ENCODE measurements at regions of chr2 and their contacts with region 1.

Region 1: DNA sequence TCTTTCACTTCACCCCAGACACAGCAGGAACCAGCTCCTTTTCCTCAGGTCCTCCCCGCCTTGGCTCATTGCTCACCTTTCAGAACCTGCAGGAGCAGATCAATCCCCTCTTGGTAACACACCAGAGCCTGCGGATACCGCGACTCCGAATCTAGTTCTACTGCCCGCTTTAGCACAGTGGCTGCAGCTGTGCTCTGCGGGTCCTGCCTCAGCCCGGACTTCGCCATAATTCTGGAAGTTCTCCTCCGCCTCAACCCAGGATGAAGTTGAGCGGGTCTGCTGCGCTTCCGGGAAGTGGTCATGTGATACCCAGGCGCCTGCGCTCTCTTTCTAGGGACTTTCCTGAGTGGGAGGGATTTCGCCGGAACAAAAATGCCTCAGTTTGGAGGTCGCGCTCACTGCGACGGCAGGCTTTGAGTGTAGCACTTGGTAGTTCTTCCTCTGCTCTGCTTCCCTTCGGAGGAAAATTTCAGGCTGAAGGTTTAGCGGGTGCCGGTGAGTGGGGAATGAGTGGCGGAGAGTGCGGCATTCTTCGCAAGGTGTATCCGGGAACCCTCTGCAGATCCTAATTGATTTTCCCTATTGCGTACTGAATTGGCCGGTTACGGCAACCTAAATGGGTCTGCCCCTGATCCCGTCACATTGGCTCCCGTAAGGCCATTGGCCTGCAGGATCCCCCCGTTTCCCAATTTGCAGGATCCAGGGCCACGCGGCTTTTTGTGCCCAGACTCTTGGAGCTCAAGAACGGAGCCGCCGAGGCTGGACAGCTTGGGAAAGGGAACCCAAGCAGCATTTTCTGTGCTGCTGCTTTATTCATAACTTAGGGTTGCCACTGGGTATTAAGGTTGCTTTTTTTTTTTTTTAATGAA is at the starts of genes MITD1 and MRPL30:
- DNase-seq: peak; percentile 92 to 93
- H3K4me3 ChIP-seq: peak within 1 kb of the TSS; percentile 84
- H3K27ac ChIP-seq: peak within 1 kb of the TSS; percentile 56
- H3K4me1 ChIP-seq: peaks cover 37% of the 10 kb centered on the region
- H3K27me3 ChIP-seq: no peaks in the 10 kb centered on the region
- CTCF ChIP-seq: no peak
- total RNA-seq, gene MITD1: 35.0 and 37.6 TPM in 2 replicates
- total RNA-seq, gene MRPL30: 50.1 and 52.6 TPM in 2 replicates

Region 2: DNA sequence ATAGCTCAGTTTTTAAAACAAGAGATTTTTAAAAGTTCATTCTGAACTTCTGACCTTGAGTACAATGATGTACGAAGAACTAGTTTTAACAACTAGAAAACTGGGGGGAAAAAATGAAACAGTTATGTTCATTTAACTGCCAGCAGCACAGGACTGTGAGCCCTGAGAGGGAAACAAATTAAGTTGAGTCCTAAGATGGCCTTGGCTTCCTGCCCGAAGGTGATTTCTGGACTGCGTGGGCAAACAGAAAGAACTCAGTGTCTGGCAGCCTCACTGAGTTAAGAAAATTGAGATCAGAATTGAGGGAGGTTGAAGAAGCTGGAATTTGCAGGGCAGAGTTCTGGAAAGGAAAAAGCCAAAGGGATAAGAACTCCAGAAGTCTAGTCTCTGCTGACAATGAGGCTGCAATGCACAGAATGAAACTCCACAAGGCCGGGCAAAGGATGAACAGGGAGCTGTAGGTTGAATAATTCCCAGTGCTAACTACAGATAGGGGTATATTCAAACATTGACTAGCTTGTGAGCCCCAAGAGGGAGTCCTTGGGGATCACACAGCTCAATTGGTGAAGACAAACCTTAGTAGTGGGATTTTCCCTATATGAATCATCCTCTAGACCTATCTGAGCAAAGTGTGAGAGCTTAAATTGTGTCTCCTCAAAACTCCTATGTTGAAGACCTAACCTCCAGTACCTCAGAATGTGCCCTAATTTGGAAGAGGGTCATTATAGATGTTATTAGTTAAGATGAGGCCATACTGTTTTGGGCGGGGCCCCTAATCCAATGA is 231.8 kb before region 1 on chr2:
- CTCF ChIA-PET with region 1: no interaction called
- POLR2A ChIA-PET with region 1: no interaction called
- intact Hi-C with region 1: no loop called
- DNase-seq: no peak
- H3K4me3 ChIP-seq: no peak overlapping the region
- H3K27ac ChIP-seq: no peak overlapping the region
- H3K4me1 ChIP-seq: no peaks in the 10 kb centered on the region
- H3K27me3 ChIP-seq: 0 out of 2 replicates have a peak, but pooled peaks cover 2% of the 10 kb centered on the region
- CTCF ChIP-seq: no peak

Region 3: GRCh38 chr2:99141110-99142108 is 39.6 kb before region 1 on chr2 and contains the start of gene C2orf15:
- CTCF ChIA-PET with region 1: no interaction called
- POLR2A ChIA-PET with region 1: no interaction called
- intact Hi-C with region 1: loop called (anchors 1 kb)
- DNase-seq: peak; percentile 94 to 99
- H3K4me3 ChIP-seq: peak within 1 kb of the TSS; percentile 86
- H3K27ac ChIP-seq: peak within 1 kb of the TSS; percentile 64
- H3K4me1 ChIP-seq: peaks cover 24% of the 10 kb centered on the region
- H3K27me3 ChIP-seq: no peaks in the 10 kb centered on the region
- CTCF ChIP-seq: no peak
- total RNA-seq, gene C2orf15: 16.9 and 18.0 TPM in 2 replicates

Region 4: GRCh38 chr2:99154643-99155536 is 26.1 kb before region 1 on chr2 and contains the starts of genes LIPT1 and TSGA10:
- CTCF ChIA-PET with region 1: no interaction called
- POLR2A ChIA-PET with region 1: no interaction called
- intact Hi-C with region 1: loop called (anchors 1 kb)
- DNase-seq: peak; percentile 81 to 89
- H3K4me3 ChIP-seq: peak within 1 kb of the TSS; percentile 68
- H3K27ac ChIP-seq: peak within 1 kb of the TSS; percentile 77
- H3K4me1 ChIP-seq: peaks cover 18% of the 10 kb centered on the region
- H3K27me3 ChIP-seq: no peaks in the 10 kb centered on the region
- CTCF ChIP-seq: peak; percentile 50
- total RNA-seq, gene LIPT1: 10.3 and 11.6 TPM in 2 replicates
- total RNA-seq, gene TSGA10: 13.5 and 14.9 TPM in 2 replicates

Measured in PC-9 (cell line).